ENCODE measurements at regions of chr1 and their contacts with region 1.

Region 1: GRCh38 chr1:31605908-31606427 is 11.5 kb upstream of the HCRTR1 start:
- DNase-seq: no peak
- H3K4me3 ChIP-seq: no peak overlapping the region
- CTCF ChIP-seq: no peak

Region 2: GRCh38 chr1:31505911-31506497 is 100.0 kb before region 1 on chr1:
- in situ Hi-C with region 1: loop called (anchors 5 kb)
- DNase-seq: peak; percentile 19
- H3K4me3 ChIP-seq: no peak overlapping the region
- CTCF ChIP-seq: no peak